ENCODE measurements at regions of chr2 and their contacts with region 1.

Region 1: DNA sequence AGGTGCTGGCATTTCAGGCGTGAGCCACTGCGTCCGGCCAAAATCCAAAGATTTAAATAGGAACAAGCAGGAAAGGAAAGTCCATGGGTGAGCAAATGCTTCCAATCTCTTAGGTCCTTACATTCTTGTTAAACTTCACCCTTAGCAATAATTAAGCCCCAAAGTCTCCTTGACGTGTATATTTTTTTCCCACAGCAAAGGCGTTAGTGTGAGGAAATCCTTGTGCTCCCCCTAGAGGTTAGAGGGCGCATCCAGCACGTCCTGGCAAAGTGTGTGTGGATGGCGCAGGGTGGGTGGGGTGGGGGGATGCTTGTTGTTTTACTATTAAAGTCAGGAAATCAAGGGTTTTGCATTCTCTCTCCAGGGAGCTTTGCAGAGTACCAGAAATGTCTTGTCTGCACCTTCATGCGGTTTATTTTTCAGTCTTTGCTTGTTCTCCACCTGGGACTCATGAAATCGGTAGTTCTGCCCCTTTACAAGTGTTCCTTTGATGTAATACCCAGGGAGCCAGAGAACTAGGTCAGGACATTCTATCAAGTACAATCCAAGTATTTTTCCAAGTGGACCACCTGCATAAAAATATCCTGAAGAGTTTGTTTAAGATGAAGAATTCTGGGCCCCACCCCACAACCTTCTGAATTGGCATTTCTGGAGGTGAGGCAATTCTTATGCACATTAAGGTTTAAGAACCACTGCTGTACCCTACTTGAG is 22.2 kb upstream of the ITSN2 start:
- H3K4me3 Mint-ChIP-seq: no peak overlapping the region
- H3K27ac Mint-ChIP-seq: no peak overlapping the region
- H3K4me1 Mint-ChIP-seq: no peaks in the 10 kb centered on the region
- H3K27me3 Mint-ChIP-seq: no peaks in the 10 kb centered on the region

Region 2: DNA sequence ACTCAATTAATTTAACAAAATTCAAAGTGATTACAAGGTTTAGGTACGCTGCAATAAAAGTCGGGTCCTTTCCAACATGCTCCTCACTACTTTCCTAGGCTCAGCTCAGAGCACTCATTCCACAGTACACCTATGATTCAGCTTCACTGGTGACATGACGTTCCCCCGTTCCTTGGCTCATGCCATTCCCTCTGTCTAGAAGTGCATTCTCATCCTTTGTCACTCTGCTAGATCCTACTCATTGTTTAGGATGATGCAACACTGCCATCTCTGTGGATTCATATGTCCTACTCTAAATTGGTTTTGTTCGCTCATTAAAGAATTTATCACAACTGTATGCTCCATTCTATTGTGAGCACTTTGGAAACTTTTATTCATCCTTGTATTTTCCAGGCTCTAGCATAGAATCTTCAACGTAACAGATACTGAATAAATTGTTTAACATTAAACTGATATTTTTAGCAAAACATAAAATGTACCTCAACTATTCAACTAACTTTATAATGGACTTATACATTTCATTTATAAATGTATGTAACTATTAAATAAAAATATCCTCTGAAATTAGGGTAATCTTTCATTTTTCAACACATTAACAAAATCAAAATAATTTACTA is 129.1 kb before region 1 on chr2:
- intact Hi-C with region 1: loop called (anchors 10 kb)
- H3K4me3 Mint-ChIP-seq: no peak overlapping the region
- H3K27ac Mint-ChIP-seq: no peak overlapping the region
- H3K4me1 Mint-ChIP-seq: no peaks in the 10 kb centered on the region
- H3K27me3 Mint-ChIP-seq: no peaks in the 10 kb centered on the region

Region 3: GRCh38 chr2:24304631-24305030 is 77.9 kb before region 1 on chr2:
- intact Hi-C with region 1: loop called (anchors 5 kb)
- H3K4me3 Mint-ChIP-seq: no peak overlapping the region
- H3K27ac Mint-ChIP-seq: no peak overlapping the region
- H3K4me1 Mint-ChIP-seq: no peaks in the 10 kb centered on the region
- H3K27me3 Mint-ChIP-seq: no peaks in the 10 kb centered on the region

Region 4: DNA sequence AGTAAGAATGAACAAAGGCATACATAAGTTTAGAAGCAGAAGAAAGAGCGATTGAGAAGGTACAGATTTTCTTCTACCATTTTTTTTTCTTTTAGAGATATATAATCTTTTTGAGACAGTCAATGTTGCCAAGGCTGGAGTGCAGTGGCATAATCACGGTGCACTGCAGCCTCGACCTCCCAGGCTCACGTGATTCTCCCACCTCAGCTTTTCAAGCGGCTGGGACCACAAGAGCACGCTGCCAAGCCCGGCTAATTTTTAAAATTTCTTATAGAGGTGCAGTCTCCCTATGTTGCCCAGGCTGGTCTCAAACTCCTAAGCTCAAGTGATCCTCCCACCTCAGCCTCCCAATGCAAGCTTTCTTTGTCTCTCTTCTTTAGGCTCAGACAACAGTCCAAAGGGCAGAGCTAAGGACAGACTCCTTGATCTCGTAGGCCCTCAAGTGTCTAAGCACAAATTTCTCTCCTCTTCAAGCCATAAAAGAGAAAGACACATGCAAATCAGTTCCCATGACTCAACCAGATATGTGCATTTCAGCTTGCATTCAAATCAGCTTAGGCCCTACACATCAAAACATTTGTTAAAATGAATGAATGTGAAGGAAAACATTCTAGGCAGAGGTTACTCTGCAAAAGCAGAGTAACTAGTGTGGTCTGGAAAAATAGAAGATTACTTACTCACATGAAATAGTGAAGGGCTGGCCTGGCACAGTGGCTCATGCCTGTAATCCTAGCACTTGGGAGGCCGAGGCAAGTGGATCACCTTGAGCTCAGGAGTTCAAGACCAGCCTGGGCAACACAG is 40.2 kb before region 1 on chr2:
- intact Hi-C with region 1: loop called (anchors 2 kb)
- H3K4me3 Mint-ChIP-seq: peak overlapping the region; percentile 17
- H3K27ac Mint-ChIP-seq: peak overlapping the region; percentile 45
- H3K4me1 Mint-ChIP-seq: peaks cover 62% of the 10 kb centered on the region
- H3K27me3 Mint-ChIP-seq: no peaks in the 10 kb centered on the region

Measured in dendritic cell treated with granulocyte-macrophage colony-stimulating factor and Interleukin-4, amounts not matched to agents 40 ng/mL and 50 ng/mL, for 4 days (primary cell).